OCI-LY7 (cell line): ENCODE measurements at regions of chr5 and their contacts with region 1.

Region 1: DNA sequence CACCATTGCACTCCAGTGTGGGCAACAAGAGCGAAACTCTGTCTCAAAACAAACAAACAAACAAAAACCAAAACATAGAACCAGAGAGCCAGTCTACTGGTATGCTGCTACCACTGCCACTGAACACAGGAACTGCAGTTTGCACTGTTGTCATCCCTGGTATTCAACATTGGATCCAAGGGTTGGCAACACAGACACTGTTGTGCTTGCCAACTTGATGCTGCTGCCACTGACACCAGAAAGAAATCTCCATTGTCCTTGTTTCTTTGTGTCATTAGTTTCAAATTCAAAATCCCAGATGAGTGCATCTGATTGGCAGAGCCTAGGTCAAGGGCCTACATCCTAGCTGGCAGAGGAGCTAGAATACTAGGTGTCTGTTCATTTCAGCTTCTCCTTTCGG is 16.2 kb downstream of the HINT1 start:
- DNase-seq: no peak
- H3K4me3 ChIP-seq: no peak overlapping the region
- H3K27ac ChIP-seq: no peak overlapping the region
- H3K4me1 ChIP-seq: no peaks in the 10 kb centered on the region
- CTCF ChIP-seq: no peak

Region 2: DNA sequence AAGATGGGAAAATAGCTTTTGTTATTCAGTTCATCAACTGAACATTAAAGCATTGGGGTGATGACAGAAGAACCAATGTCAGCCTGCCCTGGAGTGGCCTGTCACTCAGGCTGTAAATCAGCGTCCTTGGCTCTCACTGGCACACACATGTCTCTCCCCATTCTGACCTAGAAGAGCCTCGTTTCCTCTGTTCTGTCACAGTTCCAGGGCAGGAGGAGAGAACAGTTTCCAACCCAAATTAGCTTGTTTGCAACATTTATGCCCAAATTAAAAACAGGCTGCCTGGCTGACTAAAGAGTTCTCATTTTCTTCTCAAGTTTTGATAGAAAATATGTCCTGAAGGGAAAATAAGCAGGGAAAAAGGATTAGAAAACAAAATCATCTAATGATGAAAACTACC is 724.5 kb before region 1 on chr5:
- CTCF ChIA-PET with region 1: no interaction called
- POLR2A ChIA-PET with region 1: no interaction called
- intact Hi-C with region 1: no loop called
- DNase-seq: no peak
- H3K4me3 ChIP-seq: no peak overlapping the region
- H3K27ac ChIP-seq: no peak overlapping the region
- H3K4me1 ChIP-seq: no peaks in the 10 kb centered on the region
- CTCF ChIP-seq: no peak

Region 3: GRCh38 chr5:130994496-130995253 is 154.2 kb before region 1 on chr5:
- CTCF ChIA-PET with region 1: no interaction called
- POLR2A ChIA-PET with region 1: no interaction called
- intact Hi-C with region 1: no loop called
- DNase-seq: no peak
- H3K4me3 ChIP-seq: no peak overlapping the region
- H3K27ac ChIP-seq: no peak overlapping the region
- H3K4me1 ChIP-seq: no peaks in the 10 kb centered on the region
- CTCF ChIP-seq: no peak

Region 4: GRCh38 chr5:131338051-131338453 is 189.2 kb after region 1 on chr5:
- CTCF ChIA-PET with region 1: no interaction called
- POLR2A ChIA-PET with region 1: interaction called, 10 read pairs
- intact Hi-C with region 1: no loop called
- DNase-seq: no peak
- H3K4me3 ChIP-seq: no peak overlapping the region
- H3K27ac ChIP-seq: no peak overlapping the region
- H3K4me1 ChIP-seq: no peaks in the 10 kb centered on the region
- CTCF ChIP-seq: no peak